Activated T-helper 1 cell treated with anti-CD3 and anti-CD28 coated beads, Interleukin-12 subunit alpha, Interleukin-12 subunit beta, Interleukin-2, Interleukin-4 antibody, amounts not matched to agents 30 ng/mL and 10 ng/mL and 1 ng/mL, durations not matched to agents 14 hours and 24 hours and 36 hours (primary cell): ENCODE measurements at regions of chr7 and their contacts with region 1.

Region 1: GRCh38 chr7:7761340-7761980 is 43.1 kb upstream of the RPA3 start:
- DNase-seq: no peak
- H3K4me3 Mint-ChIP-seq: peak overlapping the region; percentile 90
- H3K27ac Mint-ChIP-seq: peak overlapping the region; percentile 15
- H3K4me1 Mint-ChIP-seq: peaks cover 33% of the 10 kb centered on the region
- H3K27me3 Mint-ChIP-seq: no peaks in the 10 kb centered on the region

Region 2: GRCh38 chr7:6436385-6436685 is 1325.1 kb before region 1 on chr7:
- intact Hi-C with region 1: no loop called
- DNase-seq: peak; percentile 17
- H3K4me3 Mint-ChIP-seq: peak overlapping the region; percentile 71
- H3K27ac Mint-ChIP-seq: peak overlapping the region; percentile 83
- H3K4me1 Mint-ChIP-seq: peaks cover 36% of the 10 kb centered on the region
- H3K27me3 Mint-ChIP-seq: no peaks in the 10 kb centered on the region

Region 3: DNA sequence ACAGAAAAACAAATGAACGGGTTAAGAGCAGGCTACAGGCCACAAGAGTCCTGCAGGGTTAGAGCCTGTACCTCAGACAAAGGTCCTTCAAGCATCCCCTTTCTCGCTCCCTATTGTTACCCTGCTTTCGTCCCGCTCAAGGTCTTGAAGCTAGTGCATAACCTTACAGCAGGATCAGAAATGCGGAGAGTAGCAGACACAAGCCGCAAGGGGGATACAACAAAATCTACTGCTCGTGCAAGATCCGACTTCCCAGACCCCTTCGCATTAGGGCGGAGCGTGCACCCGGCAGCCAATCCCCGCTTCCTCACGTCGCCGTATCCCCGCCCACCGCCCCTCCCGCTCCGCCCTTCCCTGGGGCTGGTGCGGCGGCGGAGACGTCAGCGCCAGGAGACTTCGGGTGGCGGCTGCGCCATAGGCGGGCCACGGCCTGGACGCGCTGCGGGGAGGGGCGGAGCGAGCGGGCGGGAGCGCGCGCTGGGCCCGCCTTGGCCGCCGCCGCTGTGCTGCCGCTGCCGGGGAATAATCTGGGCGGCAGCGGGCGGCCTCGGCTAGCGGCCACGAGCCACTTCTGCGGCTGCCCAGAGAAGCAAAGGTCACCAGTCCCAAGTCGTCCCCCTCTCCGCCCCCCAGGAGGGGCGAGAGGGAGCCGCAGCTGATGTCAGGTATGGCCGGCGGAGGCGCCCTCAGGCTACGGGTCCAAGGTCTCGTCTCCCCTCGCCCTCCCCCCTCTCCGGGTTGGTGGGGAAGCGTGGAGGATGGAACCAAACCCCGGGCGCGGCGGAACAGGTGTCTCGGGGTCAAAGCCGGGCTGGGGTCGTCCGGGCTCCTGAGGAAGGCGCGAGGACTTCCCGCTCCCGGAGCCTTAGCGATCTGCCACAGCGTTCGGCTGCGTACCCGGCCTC is 579.1 kb before region 1 on chr7 and contains the start of gene C1GALT1:
- intact Hi-C with region 1: loop called (anchors 5 kb)
- DNase-seq: peak; percentile 94
- H3K4me3 Mint-ChIP-seq: peak within 1 kb of the TSS; percentile 94
- H3K27ac Mint-ChIP-seq: peak within 1 kb of the TSS; percentile 99
- H3K4me1 Mint-ChIP-seq: peaks cover 6% of the 10 kb centered on the region
- H3K27me3 Mint-ChIP-seq: no peaks in the 10 kb centered on the region
- total RNA-seq, gene C1GALT1: 35.8 and 41.4 TPM in 2 replicates

Region 4: GRCh38 chr7:7595451-7595850 is 166.0 kb before region 1 on chr7:
- intact Hi-C with region 1: loop called (anchors 2 kb)
- DNase-seq: no peak
- H3K4me3 Mint-ChIP-seq: no peak overlapping the region
- H3K27ac Mint-ChIP-seq: no peak overlapping the region
- H3K4me1 Mint-ChIP-seq: no peaks in the 10 kb centered on the region
- H3K27me3 Mint-ChIP-seq: no peaks in the 10 kb centered on the region

Region 5: DNA sequence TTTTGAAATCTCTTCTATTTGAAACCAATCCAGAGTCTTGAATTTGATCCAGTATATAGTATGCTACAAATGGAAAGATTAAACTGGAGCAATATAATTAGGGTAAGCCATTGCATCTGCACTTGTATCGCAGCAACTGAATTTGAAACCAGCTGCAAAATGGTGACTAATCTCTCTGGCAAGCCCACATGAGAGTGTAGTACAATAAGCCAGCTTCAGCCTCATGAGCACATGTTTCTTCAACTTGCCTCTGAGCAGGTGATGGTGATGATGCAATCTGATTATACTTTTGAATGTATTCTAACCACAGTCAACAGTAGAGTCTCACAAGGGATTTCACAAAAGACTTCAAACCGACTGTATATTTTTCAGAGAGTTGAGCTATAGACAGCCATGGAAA is 42.2 kb before region 1 on chr7:
- intact Hi-C with region 1: loop called (anchors 5 kb)
- DNase-seq: peak; percentile 50
- H3K4me3 Mint-ChIP-seq: peak overlapping the region; percentile 56
- H3K27ac Mint-ChIP-seq: peak overlapping the region; percentile 80
- H3K4me1 Mint-ChIP-seq: peaks cover 27% of the 10 kb centered on the region
- H3K27me3 Mint-ChIP-seq: peaks cover 2% of the 10 kb centered on the region

Region 6: DNA sequence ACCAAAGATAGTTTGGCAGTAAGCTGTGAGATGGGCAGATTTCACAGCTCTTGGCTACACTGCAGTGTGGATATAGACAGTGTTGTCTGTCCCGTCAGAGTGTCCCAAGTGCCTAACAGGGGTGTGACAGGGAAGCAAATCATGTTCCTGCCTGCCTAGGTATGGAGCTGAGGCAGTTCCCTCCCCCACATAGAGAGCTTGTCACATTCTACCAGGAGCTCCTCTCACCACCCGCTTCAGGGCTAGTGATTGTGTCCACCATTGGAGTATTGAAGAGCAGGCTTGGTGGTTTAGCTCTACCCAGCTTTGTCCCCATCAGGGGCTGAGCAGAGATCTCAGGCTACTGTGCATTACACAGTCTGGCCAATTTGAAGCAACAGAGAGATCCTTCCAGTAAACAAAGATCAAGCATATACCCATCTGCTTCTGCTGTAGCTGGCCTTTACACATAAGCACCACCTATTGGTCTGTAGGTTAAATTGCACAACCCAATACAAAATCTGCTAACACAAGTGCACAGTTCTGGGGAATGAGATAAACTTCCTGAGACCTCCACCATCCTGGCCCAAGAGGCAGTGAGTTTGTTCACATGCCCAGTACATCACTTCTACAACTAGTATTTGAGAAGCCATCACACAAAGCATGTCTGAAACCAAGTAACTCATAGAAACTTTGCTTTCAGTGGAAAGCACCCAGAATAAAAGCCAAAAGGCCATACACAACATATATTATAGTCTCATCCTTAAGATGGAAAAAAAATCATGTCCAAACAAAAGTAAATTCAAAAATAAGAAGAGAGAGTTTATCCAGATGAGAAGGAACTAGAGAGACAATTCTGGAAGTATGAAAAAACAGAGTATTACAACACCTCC is 274.4 kb after region 1 on chr7:
- intact Hi-C with region 1: loop called (anchors 5 kb)
- DNase-seq: no peak
- H3K4me3 Mint-ChIP-seq: no peak overlapping the region
- H3K27ac Mint-ChIP-seq: no peak overlapping the region
- H3K4me1 Mint-ChIP-seq: peaks cover 18% of the 10 kb centered on the region
- H3K27me3 Mint-ChIP-seq: no peaks in the 10 kb centered on the region

Region 7: DNA sequence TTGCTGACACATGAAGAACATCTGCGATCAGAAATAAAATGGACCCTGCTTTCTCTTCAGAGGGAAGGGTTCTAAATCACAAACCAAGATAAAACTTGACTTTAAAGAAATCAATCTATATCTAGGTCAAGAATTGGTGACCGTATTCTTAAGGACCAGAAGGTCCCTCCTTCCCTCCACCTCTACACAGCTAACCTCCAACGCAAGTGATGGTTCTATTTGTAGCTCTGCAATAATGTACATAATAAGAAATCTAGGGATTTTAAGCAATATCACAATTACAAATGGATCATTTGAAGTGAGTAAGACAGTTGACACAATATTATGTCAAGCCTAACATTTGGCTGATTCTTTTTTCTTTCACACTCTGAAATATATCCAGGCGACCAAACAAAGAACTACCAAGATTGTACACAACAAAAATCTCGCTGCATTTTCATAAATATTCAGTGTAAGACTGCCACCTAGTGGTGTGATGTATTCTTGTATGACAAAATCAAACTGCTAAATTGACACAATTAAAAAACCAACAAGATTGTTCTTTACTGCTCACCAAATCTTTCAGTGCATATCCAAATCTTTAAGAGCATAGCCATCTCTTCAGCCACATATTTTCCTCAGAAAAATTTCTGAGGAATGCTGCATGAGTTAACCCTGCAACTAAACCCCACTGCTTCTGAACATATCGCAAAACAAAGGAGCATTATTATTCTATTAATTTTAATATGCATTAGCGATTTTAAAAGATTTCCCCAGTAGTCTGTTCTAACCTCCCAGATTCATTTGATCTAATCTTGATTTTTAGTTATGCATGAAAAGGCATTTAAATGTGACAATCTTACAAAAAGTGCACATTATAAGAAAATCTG is 456.0 kb after region 1 on chr7:
- intact Hi-C with region 1: loop called (anchors 1 kb)
- DNase-seq: peak; percentile 11
- H3K4me3 Mint-ChIP-seq: no peak overlapping the region
- H3K27ac Mint-ChIP-seq: no peak overlapping the region
- H3K4me1 Mint-ChIP-seq: peaks cover 11% of the 10 kb centered on the region
- H3K27me3 Mint-ChIP-seq: peaks cover 2% of the 10 kb centered on the region